Activated CD8-positive, alpha-beta memory T cell treated with anti-CD3 and anti-CD28 coated beads, Interleukin-2, amount 10 ng/mL, durations not matched to agents 7 days and 5 days (primary cell): ENCODE measurements at regions of chr4 and their contacts with region 1.

Region 1: DNA sequence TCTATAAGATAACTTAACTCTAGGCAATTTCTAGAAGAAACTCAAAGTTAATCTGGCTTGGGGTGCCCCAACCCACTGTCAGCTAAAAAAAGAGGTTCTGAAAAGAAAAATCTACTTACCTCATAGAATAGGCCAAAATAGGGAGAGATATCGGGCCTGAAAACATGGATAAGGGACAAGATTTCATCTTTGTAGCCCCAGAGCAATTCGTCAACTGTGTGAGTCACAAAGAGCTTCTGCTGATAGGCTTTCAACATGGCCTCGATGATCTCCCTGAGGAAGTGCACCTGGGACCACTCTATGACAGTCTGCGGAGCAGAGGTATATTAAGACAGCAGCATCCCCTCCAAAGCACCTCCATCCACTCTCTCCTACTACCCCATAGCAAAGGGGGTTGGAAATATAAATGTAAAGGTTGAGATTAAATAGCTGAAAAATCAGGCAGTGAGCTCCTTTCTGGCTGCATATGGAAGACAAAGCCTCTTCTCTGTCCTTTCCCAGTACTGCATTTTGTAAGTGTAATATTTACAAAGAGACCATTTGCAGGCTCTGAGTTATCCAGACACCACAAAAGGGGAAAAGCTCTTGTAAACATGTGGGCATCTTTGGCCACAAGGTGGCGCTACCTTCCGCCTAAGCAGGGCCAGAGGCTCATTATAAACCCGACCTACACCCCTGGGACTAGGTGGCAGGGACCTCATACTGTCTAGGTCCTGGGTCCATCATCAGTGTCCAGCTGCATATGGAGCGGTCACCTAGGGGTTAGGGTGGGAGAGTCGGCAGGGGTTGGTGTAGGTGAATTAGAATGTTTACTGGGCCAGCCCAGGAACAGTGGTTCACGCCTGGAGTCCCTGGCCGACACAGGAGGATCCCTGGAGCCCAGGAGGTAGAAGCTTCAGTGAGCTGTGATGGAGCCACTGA is 31.5 kb upstream of the NUP54 start:
- DNase-seq: peak; percentile 87
- ATAC-seq: peak; percentile 93
- H3K4me3 Mint-ChIP-seq: no peak overlapping the region
- H3K27ac Mint-ChIP-seq: no peak overlapping the region
- H3K4me1 Mint-ChIP-seq: no peaks in the 10 kb centered on the region
- H3K27me3 Mint-ChIP-seq: no peaks in the 10 kb centered on the region

Region 2: GRCh38 chr4:76168688-76169087 is 11.0 kb before region 1 on chr4:
- CTCF ChIA-PET with region 1: interaction called, 14 read pairs
- DNase-seq: no peak
- ATAC-seq: no peak
- H3K4me3 Mint-ChIP-seq: no peak overlapping the region
- H3K27ac Mint-ChIP-seq: no peak overlapping the region
- H3K4me1 Mint-ChIP-seq: no peaks in the 10 kb centered on the region
- H3K27me3 Mint-ChIP-seq: no peaks in the 10 kb centered on the region

Region 3: DNA sequence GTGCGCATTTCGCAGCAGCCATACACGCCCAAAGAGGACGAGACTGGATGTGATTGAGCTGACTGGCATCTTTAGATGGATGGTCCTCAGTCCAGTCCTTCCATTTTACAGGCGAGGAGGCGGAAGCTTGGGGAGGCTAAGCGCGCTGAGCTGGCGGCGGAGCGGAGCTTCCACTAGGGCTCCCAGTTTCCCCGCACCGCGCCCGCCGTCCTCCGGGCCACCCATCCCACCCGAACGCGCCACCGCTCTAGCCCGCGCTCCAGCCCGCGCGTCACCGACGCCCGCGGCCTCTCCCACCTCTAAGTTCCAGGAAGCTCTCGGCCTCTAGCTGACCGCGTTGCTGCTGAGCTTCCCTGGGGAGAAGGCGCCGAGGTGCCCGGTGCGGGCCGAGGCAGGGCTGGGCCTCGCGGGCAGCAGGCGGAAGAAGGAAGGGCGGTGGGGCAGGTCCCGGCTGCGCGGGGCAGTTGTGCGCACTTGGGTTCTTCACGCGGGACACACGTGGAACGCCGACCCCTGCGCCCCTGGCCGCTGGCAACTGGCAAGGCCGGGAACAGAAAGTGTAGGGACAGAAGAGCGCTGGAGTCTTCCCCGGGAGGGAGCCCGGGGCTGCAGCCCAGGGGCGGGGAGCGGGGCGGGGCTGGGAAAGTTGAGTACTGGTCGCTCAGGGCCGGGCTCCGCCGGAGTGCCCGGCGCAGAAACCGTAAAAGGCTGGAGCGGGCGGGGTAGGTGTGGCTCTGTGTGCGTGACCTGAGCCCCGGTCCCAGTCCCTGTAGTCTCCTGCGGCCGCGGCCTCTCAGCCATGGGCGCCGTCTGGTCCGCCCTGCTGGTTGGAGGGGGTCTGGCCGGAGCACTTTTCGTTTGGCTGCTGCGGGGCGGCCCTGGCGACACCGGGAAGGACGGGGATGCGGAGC is 126.6 kb after region 1 on chr4 and contains the start of gene STBD1:
- CTCF ChIA-PET with region 1: interaction called, 13 read pairs
- DNase-seq: peak; percentile 48
- ATAC-seq: peak; percentile 47
- H3K4me3 Mint-ChIP-seq: peak within 1 kb of the TSS; percentile 61
- H3K27ac Mint-ChIP-seq: peak within 1 kb of the TSS; percentile 57
- H3K4me1 Mint-ChIP-seq: peaks cover 42% of the 10 kb centered on the region
- H3K27me3 Mint-ChIP-seq: peaks cover 53% of the 10 kb centered on the region
- total RNA-seq, gene STBD1: 0.52 to 1.2 TPM

Region 4: GRCh38 chr4:76430519-76431388 is 251.1 kb after region 1 on chr4:
- CTCF ChIA-PET with region 1: interaction called, 10 read pairs
- DNase-seq: no peak
- ATAC-seq: peak; percentile 47
- H3K4me3 Mint-ChIP-seq: no peak overlapping the region
- H3K27ac Mint-ChIP-seq: no peak overlapping the region
- H3K4me1 Mint-ChIP-seq: peaks cover 2% of the 10 kb centered on the region
- H3K27me3 Mint-ChIP-seq: peaks cover 38% of the 10 kb centered on the region